PC-3 (cell line): ENCODE measurements at regions of chr5 and their contacts with region 1.

Region 1: DNA sequence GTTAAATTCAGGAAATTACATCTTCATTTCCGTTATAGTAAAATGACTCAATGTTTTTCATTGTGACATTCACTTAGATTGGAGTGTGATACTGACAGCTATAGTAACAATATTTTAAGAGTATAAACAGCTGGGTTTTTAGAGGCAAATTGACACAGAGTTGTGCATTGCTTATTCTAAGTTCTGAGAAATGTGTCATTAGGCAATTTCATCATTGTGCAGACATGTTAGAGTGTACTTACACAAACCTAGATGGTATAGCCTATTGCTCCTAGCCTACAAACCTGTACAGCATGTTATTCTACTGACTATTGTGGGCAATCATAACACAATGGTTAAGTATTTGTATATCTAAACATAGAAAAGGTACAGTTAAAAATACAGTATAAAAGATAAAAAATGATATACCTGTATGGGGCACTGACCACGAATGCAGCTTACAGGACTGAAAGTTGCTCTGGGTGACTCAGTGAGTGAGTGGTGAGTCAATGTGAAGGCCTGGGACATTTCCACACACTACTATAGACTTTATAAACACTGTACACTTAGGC is 132.7 kb downstream of the PDE4D start:
- DNase-seq: peak; percentile 60
- ATAC-seq: peak; percentile 80
- H3K4me3 ChIP-seq: 0 out of 2 replicates have a peak overlapping the region, but pooled peaks have one; percentile 18
- H3K27ac ChIP-seq: peak overlapping the region; percentile 98
- H3K4me1 ChIP-seq: peaks cover 53% of the 10 kb centered on the region
- H3K27me3 ChIP-seq: no peaks in the 10 kb centered on the region
- CTCF ChIP-seq: no peak

Region 2: DNA sequence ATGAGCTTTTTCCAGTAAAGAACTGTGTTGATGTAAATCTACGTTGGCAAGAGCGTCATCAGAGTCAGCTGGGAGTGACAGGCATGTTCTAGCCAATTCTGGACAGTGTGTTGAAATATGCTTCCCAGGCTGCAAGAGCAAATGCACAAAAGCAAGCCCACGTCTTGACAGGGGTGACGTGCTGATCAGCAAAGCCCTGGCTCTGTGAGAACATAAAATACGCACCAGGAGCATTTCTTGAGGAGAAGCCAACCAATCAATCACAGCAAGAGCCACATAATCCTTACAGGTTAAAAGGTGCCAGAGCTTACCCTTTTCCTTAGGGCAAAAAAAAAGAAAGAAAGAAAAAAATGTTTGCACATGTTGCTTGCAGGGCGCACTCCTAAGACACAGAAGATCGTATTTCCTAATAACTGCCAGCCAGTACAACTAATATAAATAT is 15.4 kb before region 1 on chr5:
- CTCF ChIA-PET with region 1: no interaction called
- POLR2A ChIA-PET with region 1: no interaction called
- intact Hi-C with region 1: loop called (anchors 1 kb)
- DNase-seq: peak; percentile 61
- ATAC-seq: peak; percentile 44
- H3K4me3 ChIP-seq: peak overlapping the region; percentile 48; the same call in 1 of the 2 replicates
- H3K27ac ChIP-seq: peak overlapping the region; percentile 99
- H3K4me1 ChIP-seq: peaks cover 37% of the 10 kb centered on the region
- H3K27me3 ChIP-seq: no peaks in the 10 kb centered on the region
- CTCF ChIP-seq: no peak

Region 3: GRCh38 chr5:59790399-59791125 is 29.7 kb after region 1 on chr5:
- CTCF ChIA-PET with region 1: no interaction called
- POLR2A ChIA-PET with region 1: interaction called, 27 read pairs
- intact Hi-C with region 1: loop called (anchors 1 kb)
- DNase-seq: peak; percentile 47
- ATAC-seq: peak; percentile 40
- H3K4me3 ChIP-seq: peak overlapping the region; percentile 36; the same call in 1 of the 2 replicates
- H3K27ac ChIP-seq: peak overlapping the region; percentile 97
- H3K4me1 ChIP-seq: peaks cover 58% of the 10 kb centered on the region
- H3K27me3 ChIP-seq: no peaks in the 10 kb centered on the region
- CTCF ChIP-seq: no peak